GM12878 (cell line): ENCODE measurements at regions of chr6 and their contacts with region 1.

Region 1: DNA sequence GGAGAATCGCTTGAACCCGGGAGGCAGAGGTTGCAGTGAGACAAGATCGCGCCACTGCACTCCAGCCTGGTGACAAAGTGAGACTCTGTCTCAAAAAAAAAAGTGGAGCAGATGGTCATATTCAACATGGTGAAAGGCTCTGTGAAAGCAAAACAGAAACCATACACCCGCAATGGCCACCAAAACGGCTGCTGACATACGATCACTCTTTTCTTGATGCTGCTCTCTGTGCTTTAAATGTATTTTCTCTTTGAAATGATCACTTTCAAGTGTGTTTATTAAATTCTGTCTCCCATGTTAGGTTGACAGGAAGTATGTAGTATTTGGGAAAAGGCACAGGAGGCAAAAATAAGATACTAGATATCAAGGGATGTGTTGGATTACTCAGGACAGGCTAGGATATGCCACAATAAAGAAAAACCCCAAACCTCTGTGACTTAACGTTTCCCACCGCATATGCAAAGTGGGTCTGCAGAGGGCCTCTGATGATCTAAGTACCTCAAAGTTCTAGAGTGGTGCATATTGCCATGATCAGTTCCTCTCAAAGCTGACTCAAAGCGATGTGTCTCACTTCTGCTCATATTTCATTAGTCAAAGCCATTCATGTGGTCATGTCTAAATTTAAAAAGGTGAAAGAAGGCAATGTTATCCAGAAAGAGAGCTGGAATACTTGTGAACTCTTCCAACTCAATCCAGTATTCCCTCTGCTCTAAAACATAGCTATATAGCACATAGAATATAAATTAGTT is 155.1 kb upstream of the SOX4 start:
- DNase-seq: peak; percentile 97
- ATAC-seq: peak; percentile 97
- H3K4me3 ChIP-seq: peak overlapping the region; percentile 60; the same call in 1 of the 2 replicates
- H3K27ac ChIP-seq: peak overlapping the region; percentile 89
- H3K4me1 ChIP-seq: peaks cover 17% of the 10 kb centered on the region
- H3K27me3 ChIP-seq: no peaks in the 10 kb centered on the region
- CTCF ChIP-seq: no peak
- EP300 ChIP-seq: peak; percentile 93 to 99
- POLR2A ChIP-seq: no peak
- RAD21 ChIP-seq: no peak

Region 2: GRCh38 chr6:20708367-20709124 is 729.9 kb before region 1 on chr6:
- CTCF ChIA-PET with region 1: no interaction called
- POLR2A ChIA-PET with region 1: no interaction called
- RAD21 ChIA-PET with region 1: no interaction called
- SMC1A ChIA-PET with region 1: no interaction called
- in situ Hi-C with region 1: no loop called
- intact Hi-C with region 1: loop called (anchors 10 kb)
- DNase-seq: peak; percentile 59
- ATAC-seq: peak; percentile 87
- H3K4me3 ChIP-seq: no peak overlapping the region
- H3K27ac ChIP-seq: peak overlapping the region; percentile 20
- H3K4me1 ChIP-seq: peaks cover 13% of the 10 kb centered on the region
- H3K27me3 ChIP-seq: no peaks in the 10 kb centered on the region
- CTCF ChIP-seq: no peak
- EP300 ChIP-seq: peak; percentile 98 to 99
- POLR2A ChIP-seq: no peak
- RAD21 ChIP-seq: no peak

Region 3: DNA sequence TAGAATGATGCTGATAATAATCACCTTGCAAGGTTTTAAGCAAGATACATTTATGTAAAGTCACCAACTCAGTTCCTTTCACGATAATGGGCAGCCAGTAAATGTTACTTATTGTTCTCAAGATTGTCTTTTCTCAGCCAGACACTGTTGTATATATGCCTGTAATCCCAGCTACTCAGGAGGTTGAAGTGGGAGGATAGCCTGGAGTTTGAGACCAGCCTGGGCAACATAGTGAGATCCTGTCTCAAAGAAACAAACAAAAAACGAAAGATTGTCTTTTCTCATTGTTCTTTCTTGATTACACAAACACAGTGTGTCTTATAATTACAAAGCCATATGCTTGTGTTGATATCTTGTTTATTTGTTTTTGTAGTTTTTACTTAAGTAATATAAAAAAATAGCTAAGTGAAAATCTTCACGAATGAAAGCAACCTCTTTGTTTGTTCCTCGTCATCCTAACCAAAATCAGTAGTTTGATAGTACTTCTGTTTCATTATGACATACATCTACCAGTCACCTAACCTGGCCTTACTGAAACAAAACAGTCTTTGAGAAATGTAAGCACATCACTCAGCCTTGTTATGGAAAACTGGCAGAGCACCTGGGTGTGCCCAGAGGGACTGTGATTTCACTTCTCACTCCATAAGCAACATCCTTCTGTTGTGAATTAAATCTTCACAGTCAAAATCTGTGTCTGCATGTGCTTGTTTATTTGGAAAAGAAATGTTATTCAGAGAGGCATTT is 281.1 kb before region 1 on chr6:
- CTCF ChIA-PET with region 1: no interaction called
- POLR2A ChIA-PET with region 1: no interaction called
- RAD21 ChIA-PET with region 1: interaction called, 3 read pairs
- SMC1A ChIA-PET with region 1: interaction called, 3 read pairs
- in situ Hi-C with region 1: no loop called
- intact Hi-C with region 1: loop called (anchors 1 kb)
- DNase-seq: peak; percentile 53
- ATAC-seq: peak; percentile 86
- H3K4me3 ChIP-seq: no peak overlapping the region
- H3K27ac ChIP-seq: peak overlapping the region; percentile 54; the same call in 1 of the 2 replicates
- H3K4me1 ChIP-seq: peaks cover 13% of the 10 kb centered on the region; the same call in 1 of the 2 replicates
- H3K27me3 ChIP-seq: no peaks in the 10 kb centered on the region
- CTCF ChIP-seq: no peak
- EP300 ChIP-seq: peak; percentile 72 to 84; a peak in 3 of 4 replicates
- POLR2A ChIP-seq: no peak
- RAD21 ChIP-seq: no peak

Region 4: GRCh38 chr6:21213492-21213891 is 224.9 kb before region 1 on chr6:
- CTCF ChIA-PET with region 1: no interaction called
- POLR2A ChIA-PET with region 1: no interaction called
- RAD21 ChIA-PET with region 1: interaction called, 4 read pairs
- SMC1A ChIA-PET with region 1: interaction called, 3 read pairs
- in situ Hi-C with region 1: no loop called
- intact Hi-C with region 1: loop called (anchors 1 kb)
- DNase-seq: peak; percentile 84
- ATAC-seq: peak; percentile 77
- H3K4me3 ChIP-seq: 0 out of 2 replicates have a peak overlapping the region, but pooled peaks have one; percentile 47
- H3K27ac ChIP-seq: peak overlapping the region; percentile 74
- H3K4me1 ChIP-seq: peaks cover 42% of the 10 kb centered on the region
- H3K27me3 ChIP-seq: no peaks in the 10 kb centered on the region
- CTCF ChIP-seq: no peak
- EP300 ChIP-seq: peak; percentile 67 to 69; a peak in 2 of 4 replicates
- POLR2A ChIP-seq: no peak
- RAD21 ChIP-seq: no peak

Region 5: DNA sequence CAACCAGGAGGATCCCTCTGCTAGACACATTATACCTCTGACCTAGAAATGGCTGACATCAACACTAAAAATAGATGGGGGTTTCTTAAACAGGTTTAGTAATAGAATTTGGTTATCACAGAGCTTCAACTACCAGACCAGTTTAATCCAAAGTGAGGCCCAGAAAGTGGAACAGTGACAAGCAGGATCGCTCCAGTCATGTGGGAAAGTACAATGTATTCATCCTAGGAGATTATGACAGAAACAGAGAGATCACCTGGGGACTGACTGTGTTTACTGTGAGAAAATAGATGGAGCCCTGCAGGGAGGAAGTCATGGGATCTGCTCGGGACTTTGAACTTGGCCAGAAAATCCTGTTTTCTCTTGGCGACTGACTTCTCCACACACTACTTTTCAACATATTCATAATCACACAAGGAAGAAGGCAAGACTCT is 83.6 kb before region 1 on chr6:
- CTCF ChIA-PET with region 1: no interaction called
- POLR2A ChIA-PET with region 1: no interaction called
- RAD21 ChIA-PET with region 1: no interaction called
- SMC1A ChIA-PET with region 1: no interaction called
- in situ Hi-C with region 1: no loop called
- intact Hi-C with region 1: no loop called
- DNase-seq: peak; percentile 16
- ATAC-seq: peak; percentile 78
- H3K4me3 ChIP-seq: no peak overlapping the region
- H3K27ac ChIP-seq: no peak overlapping the region
- H3K4me1 ChIP-seq: no peaks in the 10 kb centered on the region
- H3K27me3 ChIP-seq: no peaks in the 10 kb centered on the region
- CTCF ChIP-seq: no peak
- EP300 ChIP-seq: no peak
- POLR2A ChIP-seq: no peak
- RAD21 ChIP-seq: no peak

Region 6: DNA sequence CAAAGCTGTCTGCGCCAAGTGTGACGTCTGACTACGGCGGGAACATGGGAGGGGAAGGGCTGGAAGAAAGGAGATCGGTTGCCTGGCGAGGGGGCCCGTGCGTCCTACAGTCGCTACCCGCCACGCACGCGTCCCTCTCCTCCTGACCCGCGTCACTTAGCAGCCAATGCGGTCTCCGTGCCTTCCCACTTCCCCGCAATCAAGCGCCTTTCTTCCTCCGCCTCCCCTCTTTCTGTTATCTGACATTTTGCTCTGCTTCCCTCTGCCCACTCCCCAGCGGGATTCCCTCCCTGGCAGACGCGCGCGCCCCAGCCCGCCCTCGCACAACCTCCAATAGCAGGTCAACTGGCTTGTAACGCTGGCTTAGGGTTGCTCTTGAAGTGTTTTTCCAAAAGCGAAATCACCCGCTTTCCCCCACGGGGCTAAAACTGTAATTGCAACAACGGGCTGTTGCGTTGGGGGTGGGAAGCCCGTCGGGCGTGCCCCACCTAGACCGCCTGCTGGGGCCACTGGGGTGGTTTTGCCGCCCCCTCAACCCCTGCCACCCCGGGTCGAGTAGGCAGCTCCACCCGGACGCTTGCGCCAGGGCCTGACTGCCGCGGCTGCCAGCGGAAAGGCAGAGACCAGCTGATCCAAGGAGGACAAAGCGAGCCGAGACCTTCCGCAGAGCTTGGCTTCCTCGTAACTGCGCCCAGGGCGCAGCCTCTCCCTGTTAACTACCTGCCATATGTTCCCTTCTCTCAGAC is 148.9 kb after region 1 on chr6:
- CTCF ChIA-PET with region 1: interaction called, 5 read pairs
- POLR2A ChIA-PET with region 1: no interaction called
- RAD21 ChIA-PET with region 1: no interaction called
- SMC1A ChIA-PET with region 1: interaction called, 3 read pairs
- in situ Hi-C with region 1: no loop called
- intact Hi-C with region 1: loop called (anchors 1 kb)
- DNase-seq: no peak
- ATAC-seq: peak; percentile 62
- H3K4me3 ChIP-seq: peak overlapping the region; percentile 79
- H3K27ac ChIP-seq: peak overlapping the region; percentile 77
- H3K4me1 ChIP-seq: peaks cover 4% of the 10 kb centered on the region; the same call in 1 of the 2 replicates
- H3K27me3 ChIP-seq: no peaks in the 10 kb centered on the region
- CTCF ChIP-seq: peak; percentile 5 to 30 (median 19); a peak in 2 of 6 replicates
- EP300 ChIP-seq: no peak
- POLR2A ChIP-seq: no peak
- RAD21 ChIP-seq: peak; percentile 45